Esophagus muscularis mucosa (tissue), 4 donors: ENCODE measurements at regions of chr6 and their contacts with region 1.

Region 1: DNA sequence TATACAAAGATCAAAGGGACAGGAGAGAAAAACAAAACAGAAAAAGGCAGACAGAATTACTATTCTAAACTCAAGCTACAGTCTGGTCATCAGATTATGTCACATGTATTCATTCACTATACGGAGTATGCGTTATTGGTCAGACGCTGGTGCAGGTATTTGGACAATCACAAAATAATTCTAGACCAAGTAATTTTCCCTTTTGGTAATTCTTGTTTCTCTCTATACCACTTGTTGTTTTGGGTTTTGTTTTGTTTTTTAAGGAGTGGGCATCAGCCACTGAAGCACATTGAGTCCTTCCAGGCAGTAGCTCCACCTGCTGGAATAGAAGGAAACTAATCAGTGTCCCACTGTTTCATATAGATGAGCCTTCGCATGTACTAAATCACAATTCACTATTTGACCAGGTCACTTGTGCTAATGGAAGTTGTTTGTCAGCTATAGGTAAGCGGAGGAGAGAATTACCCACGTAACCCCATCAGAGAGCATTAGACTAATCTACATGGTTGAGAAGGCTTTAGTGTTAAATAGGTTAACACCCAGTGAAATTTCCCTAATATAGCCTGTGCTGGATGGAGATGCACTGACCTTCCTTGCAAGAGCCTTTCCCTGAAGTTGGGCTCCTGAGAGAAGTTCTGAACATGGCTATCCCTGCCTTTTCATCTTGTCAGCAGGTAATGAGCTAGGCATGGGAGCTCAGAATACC is 77.9 kb downstream of the TNFAIP3 start:
- DNase-seq: no peak
- H3K4me3 ChIP-seq: peak overlapping the region in 1 of 4 donors; percentile 23
- H3K27ac ChIP-seq: no peak overlapping the region
- H3K4me1 ChIP-seq: peaks cover 6 to 13% (median 9%) of the 10 kb centered on the region in 4 donors
- H3K27me3 ChIP-seq: no peaks in the 10 kb centered on the region
- CTCF ChIP-seq: peak; percentile 78 to 87 (median 83)
- EP300 ChIP-seq: no peak
- POLR2A ChIP-seq: no peak

Region 2: GRCh38 chr6:137799950-137800568 is 144.9 kb before region 1 on chr6:
- intact Hi-C with region 1: loop called (anchors 10 kb)
- DNase-seq: no peak
- H3K4me3 ChIP-seq: no peak overlapping the region
- H3K27ac ChIP-seq: no peak overlapping the region
- H3K4me1 ChIP-seq: peaks cover 11 to 40% (median 35%) of the 10 kb centered on the region in 4 donors
- H3K27me3 ChIP-seq: no peaks in the 10 kb centered on the region
- CTCF ChIP-seq: peak; percentile 42 to 55 (median 44)
- EP300 ChIP-seq: no peak
- POLR2A ChIP-seq: no peak